ENCODE measurements at regions of chr2 and their contacts with region 1.

Region 1: GRCh38 chr2:205766779-205767359 is 84.6 kb downstream of the NRP2 start:
- DNase-seq: peak in 4 of 5 donors; percentile 78 to 93 (median 86)
- H3K4me3 ChIP-seq: no peak overlapping the region
- H3K27ac ChIP-seq: no peak overlapping the region
- H3K4me1 ChIP-seq: peaks cover 0 to 2% (median 0%) of the 10 kb centered on the region in 3 donors
- H3K27me3 ChIP-seq: no peaks in the 10 kb centered on the region
- CTCF ChIP-seq: peak; percentile 84

Region 2: GRCh38 chr2:205427112-205427511 is 339.8 kb before region 1 on chr2:
- intact Hi-C with region 1: no loop called
- DNase-seq: no peak
- H3K4me3 ChIP-seq: no peak overlapping the region
- H3K27ac ChIP-seq: no peak overlapping the region
- H3K4me1 ChIP-seq: no peaks in the 10 kb centered on the region
- H3K27me3 ChIP-seq: no peaks in the 10 kb centered on the region
- CTCF ChIP-seq: no peak

Region 3: DNA sequence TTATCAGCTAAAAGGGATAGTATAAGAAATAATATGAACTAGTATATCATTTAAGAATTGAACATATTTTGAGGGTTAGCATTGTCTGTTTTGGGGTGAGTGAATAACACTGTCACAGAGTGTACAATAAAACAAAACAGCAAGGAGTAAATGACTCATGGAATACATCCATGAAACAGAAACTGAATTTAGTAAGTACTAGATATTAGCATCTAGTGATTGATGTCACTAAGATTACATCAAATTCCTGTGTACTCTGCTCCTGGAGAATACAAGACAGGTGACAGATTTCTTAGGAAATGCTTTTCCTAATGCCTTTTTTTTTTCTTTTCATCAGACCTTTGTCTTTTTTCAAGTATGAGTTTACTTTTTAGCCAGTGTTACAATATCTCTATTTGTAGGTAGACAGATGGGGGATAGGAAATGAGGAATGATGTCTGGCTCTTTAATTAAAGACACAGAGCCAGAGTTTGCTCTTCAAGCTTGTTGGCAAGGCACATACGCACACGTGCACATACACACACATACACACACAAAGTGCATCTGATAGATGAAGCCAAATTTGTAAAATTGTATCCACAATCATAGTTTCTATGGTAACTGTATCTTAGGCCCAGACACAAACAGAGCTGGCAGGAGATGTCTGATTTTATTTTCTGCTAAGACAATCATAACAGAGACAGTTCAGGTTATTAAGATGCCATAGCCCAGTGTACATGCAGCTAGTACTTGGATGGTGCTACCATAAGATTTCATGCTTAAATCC is 222.7 kb before region 1 on chr2:
- intact Hi-C with region 1: no loop called
- DNase-seq: no peak
- H3K4me3 ChIP-seq: no peak overlapping the region
- H3K27ac ChIP-seq: no peak overlapping the region
- H3K4me1 ChIP-seq: no peaks in the 10 kb centered on the region
- H3K27me3 ChIP-seq: no peaks in the 10 kb centered on the region
- CTCF ChIP-seq: no peak

Region 4: DNA sequence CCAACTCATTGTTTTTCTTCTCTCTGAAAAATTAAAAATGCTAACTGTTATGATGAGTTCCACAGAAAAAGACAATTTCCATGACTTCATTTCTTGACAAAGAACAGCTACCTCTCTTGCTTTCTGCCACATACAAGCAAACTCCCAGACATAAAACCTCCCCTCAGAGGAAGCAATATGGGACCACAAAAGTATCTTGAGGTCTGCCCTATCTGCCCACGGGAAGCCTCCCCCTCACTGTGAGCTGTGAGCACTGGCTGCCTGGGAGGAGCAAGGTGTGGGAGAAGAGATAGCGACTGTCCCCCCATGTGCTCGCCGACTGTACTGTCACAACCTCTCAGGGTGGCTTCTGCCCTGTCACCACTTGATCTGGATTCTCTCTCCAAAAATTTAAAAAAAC is 154.2 kb before region 1 on chr2:
- intact Hi-C with region 1: no loop called
- DNase-seq: no peak
- H3K4me3 ChIP-seq: no peak overlapping the region
- H3K27ac ChIP-seq: no peak overlapping the region
- H3K4me1 ChIP-seq: peaks cover 0 to 2% (median 0%) of the 10 kb centered on the region in 3 donors
- H3K27me3 ChIP-seq: no peaks in the 10 kb centered on the region
- CTCF ChIP-seq: no peak

Region 5: DNA sequence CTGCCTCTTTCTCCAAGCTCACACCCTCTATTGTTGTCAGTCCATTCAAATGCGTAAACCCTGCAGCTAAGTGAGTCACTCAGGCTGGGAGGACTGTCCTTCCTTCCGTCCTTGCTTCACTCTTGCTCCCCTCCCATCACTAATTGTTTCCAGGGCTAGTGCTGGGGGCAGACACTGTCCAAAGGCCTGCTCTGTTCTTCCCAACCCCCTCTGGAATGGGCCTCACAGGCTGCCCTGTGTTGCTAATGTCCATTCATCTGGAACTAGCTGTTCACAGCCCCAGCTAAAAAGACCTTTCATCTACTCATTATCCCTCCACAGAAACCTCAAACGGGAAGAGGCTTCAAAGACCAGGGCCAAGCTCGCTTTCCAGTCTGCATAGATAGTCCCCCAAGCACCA is 116.4 kb before region 1 on chr2:
- intact Hi-C with region 1: no loop called
- DNase-seq: peak in 1 of 5 donors; percentile 28
- H3K4me3 ChIP-seq: no peak overlapping the region
- H3K27ac ChIP-seq: no peak overlapping the region
- H3K4me1 ChIP-seq: no peaks in the 10 kb centered on the region
- H3K27me3 ChIP-seq: no peaks in the 10 kb centered on the region
- CTCF ChIP-seq: no peak

Region 6: GRCh38 chr2:205680067-205680466 is 86.8 kb before region 1 on chr2:
- intact Hi-C with region 1: loop called (anchors 10 kb)
- DNase-seq: peak in 4 of 5 donors; percentile 90 to 96 (median 93)
- H3K4me3 ChIP-seq: no peak overlapping the region
- H3K27ac ChIP-seq: no peak overlapping the region
- H3K4me1 ChIP-seq: peaks cover 0 to 15% (median 5%) of the 10 kb centered on the region in 3 donors
- H3K27me3 ChIP-seq: no peaks in the 10 kb centered on the region
- CTCF ChIP-seq: peak; percentile 50

Measured in kidney (tissue), 22 donors.